BJ (cell line): ENCODE measurements at regions of chr12 and their contacts with region 1.

Region 1: GRCh38 chr12:110280779-110281548 is at the start of gene ATP2A2:
- DNase-seq: no peak
- H3K4me3 ChIP-seq: peak within 1 kb of the TSS; percentile 84
- H3K27me3 ChIP-seq: no peaks in the 10 kb centered on the region
- CTCF ChIP-seq: no peak
- polyA plus RNA-seq, gene ATP2A2: 145 and 267 TPM in 2 replicates

Region 2: GRCh38 chr12:110124184-110124995 is 156.6 kb before region 1 on chr12 and contains the start of gene IFT81:
- CTCF ChIA-PET with region 1: no interaction called
- POLR2A ChIA-PET with region 1: interaction called, 10 read pairs
- DNase-seq: no peak
- H3K4me3 ChIP-seq: peak within 1 kb of the TSS; percentile 86
- H3K27me3 ChIP-seq: no peaks in the 10 kb centered on the region
- CTCF ChIP-seq: no peak
- polyA plus RNA-seq, gene IFT81: 6.6 and 12.0 TPM in 2 replicates

Region 3: DNA sequence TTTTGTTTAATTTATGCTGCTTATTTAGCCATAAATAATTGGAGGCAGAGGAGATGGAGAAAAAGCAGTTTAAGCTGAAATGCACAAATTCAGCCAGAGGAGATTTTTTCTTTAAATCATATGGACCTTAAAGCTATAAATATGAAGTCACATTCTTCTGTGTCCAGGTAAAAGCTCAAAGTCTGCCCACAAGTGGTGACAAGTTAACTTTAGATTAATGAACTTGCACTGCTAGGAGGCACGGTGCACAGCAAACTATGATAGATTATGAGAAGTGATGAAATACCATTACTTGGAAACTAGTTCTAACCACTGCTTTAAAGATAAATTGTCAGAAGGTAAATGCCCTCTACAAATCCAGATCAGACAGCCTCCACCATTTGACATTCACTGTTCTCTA is 87.8 kb before region 1 on chr12:
- CTCF ChIA-PET with region 1: no interaction called
- POLR2A ChIA-PET with region 1: no interaction called
- DNase-seq: no peak
- H3K4me3 ChIP-seq: no peak overlapping the region
- H3K27me3 ChIP-seq: no peaks in the 10 kb centered on the region
- CTCF ChIP-seq: no peak

Region 4: GRCh38 chr12:110424237-110424636 is 143.3 kb after region 1 on chr12:
- CTCF ChIA-PET with region 1: no interaction called
- POLR2A ChIA-PET with region 1: no interaction called
- DNase-seq: no peak
- H3K4me3 ChIP-seq: no peak overlapping the region
- H3K27me3 ChIP-seq: no peaks in the 10 kb centered on the region
- CTCF ChIP-seq: no peak